Heart right ventricle (tissue), 16 donors: ENCODE measurements at regions of chr4 and their contacts with region 1.

Region 1: DNA sequence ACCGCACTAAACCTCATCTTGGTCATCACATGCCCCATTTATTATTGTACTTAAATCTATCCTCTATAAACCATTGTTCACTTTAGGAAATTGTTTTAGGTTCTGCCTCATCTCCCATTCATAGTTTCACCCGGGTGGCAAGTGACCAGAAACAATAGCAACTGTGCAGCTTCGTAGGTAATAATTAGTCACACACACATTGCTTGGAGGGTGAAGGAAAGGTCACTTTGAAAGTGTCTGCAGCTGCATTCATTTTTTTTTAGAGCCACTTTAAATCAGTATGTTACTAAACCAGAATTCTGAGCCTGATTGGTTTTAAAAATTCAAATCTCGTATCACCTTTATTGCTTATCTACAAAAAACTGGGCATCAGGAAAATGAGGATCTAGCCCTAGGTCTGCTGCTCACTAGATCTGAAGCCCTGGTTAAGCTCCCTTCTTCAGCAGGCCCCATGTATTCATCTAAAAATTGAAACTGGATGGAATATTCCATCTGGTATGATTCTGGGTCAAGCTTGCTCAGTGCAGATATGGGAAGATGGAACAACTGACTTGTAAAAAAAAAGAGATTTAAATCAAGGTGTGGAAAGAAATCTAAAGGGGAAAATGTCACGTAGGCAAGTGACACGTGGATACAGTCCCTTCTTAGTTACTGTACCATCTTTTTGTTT is 62.4 kb downstream of the LIMCH1 start:
- DNase-seq: peak in 1 of 2 donors; percentile 23
- ATAC-seq: peak in 7 of 8 donors; percentile 53 to 84 (median 74)
- H3K4me3 ChIP-seq: no peak overlapping the region
- H3K27ac ChIP-seq: peak overlapping the region in 3 of 10 donors; percentile 2 to 12 (median 10)
- H3K4me1 ChIP-seq: peaks cover 4 to 70% (median 41%) of the 10 kb centered on the region in 9 donors
- H3K27me3 ChIP-seq: no peaks in the 10 kb centered on the region
- CTCF ChIP-seq: no peak

Region 2: GRCh38 chr4:41579526-41579925 is 20.9 kb before region 1 on chr4:
- intact Hi-C with region 1: loop called in 1 of 10 experiments (anchors 1 kb)
- DNase-seq: no peak
- ATAC-seq: no peak
- H3K4me3 ChIP-seq: no peak overlapping the region
- H3K27ac ChIP-seq: peak overlapping the region in 3 of 10 donors; percentile 23 to 43 (median 37)
- H3K4me1 ChIP-seq: peaks cover 0 to 77% (median 26%) of the 10 kb centered on the region in 9 donors
- H3K27me3 ChIP-seq: no peaks in the 10 kb centered on the region
- CTCF ChIP-seq: no peak